ENCODE measurements at regions of chr7 and their contacts with region 1.

Region 1: GRCh38 chr7:43834463-43835251 is 34.7 kb downstream of the MRPS24 start:
- DNase-seq: peak in 1 of 2 experiments; percentile 83
- H3K4me3 ChIP-seq: peak overlapping the region; percentile 36; the same call in 1 of the 2 replicates
- H3K27ac ChIP-seq: no peak overlapping the region
- H3K4me1 ChIP-seq: no peaks in the 10 kb centered on the region; the same call in 1 of the 2 replicates
- H3K27me3 ChIP-seq: no peaks in the 10 kb centered on the region
- CTCF ChIP-seq: no peak

Region 2: DNA sequence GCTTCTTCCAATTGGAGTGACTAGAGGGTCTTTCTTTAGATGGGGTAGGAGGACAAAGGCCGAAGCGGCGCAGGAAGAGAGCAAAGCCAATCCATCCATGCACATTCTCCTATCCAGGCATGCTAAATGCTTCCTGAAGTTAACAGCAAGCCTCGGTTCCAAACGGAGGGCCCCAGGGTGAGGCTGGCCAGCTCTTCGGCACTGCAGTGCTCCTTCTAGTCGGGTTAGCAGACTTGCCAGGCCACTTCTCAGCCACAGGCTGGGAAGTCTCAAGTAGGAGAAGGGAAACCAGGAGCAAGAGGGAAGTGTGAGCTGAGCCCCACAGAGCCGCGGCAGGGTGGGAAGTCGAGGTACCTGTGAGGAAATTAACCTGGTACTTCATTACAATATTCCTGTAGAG is 1878.0 kb before region 1 on chr7:
- CTCF ChIA-PET with region 1: no interaction called
- POLR2A ChIA-PET with region 1: interaction called, 21 read pairs
- intact Hi-C with region 1: no loop called
- DNase-seq: no peak
- H3K4me3 ChIP-seq: no peak overlapping the region
- H3K27ac ChIP-seq: no peak overlapping the region
- H3K4me1 ChIP-seq: no peaks in the 10 kb centered on the region
- H3K27me3 ChIP-seq: peaks cover 91% of the 10 kb centered on the region
- CTCF ChIP-seq: no peak

Region 3: GRCh38 chr7:43454936-43455518 is 379.6 kb before region 1 on chr7:
- CTCF ChIA-PET with region 1: no interaction called
- POLR2A ChIA-PET with region 1: no interaction called
- intact Hi-C with region 1: loop called (anchors 5 kb)
- DNase-seq: peak in 1 of 2 experiments; percentile 48
- H3K4me3 ChIP-seq: no peak overlapping the region; the same call in 1 of the 2 replicates
- H3K27ac ChIP-seq: no peak overlapping the region
- H3K4me1 ChIP-seq: no peaks in the 10 kb centered on the region
- H3K27me3 ChIP-seq: peaks cover 49% of the 10 kb centered on the region
- CTCF ChIP-seq: peak; percentile 83

Region 4: DNA sequence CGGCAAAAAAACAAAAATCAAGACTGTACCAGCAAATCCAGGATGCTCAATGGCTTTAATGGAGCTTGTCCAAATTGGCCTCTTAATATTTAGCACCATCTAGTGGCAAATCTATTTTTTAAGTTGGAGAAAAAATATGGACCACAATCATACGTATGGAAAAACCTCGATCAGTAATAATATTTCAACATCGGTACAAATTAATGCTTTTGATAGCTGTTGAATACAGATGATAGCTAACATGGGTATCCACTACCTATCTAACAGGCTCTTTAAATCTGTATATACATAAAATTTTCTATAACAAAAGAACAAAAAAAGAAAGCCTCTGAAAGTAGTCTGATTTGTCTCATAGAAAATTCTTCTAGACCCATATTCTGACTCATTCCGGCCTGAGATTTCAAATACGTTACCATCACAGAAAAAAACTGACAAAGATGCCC is 134.6 kb before region 1 on chr7:
- CTCF ChIA-PET with region 1: interaction called, 3 read pairs
- POLR2A ChIA-PET with region 1: no interaction called
- intact Hi-C with region 1: loop called (anchors 1 kb)
- DNase-seq: peak in 1 of 2 experiments; percentile 68
- H3K4me3 ChIP-seq: no peak overlapping the region
- H3K27ac ChIP-seq: no peak overlapping the region
- H3K4me1 ChIP-seq: peaks cover 5% of the 10 kb centered on the region
- H3K27me3 ChIP-seq: no peaks in the 10 kb centered on the region
- CTCF ChIP-seq: peak; percentile 93

Region 5: GRCh38 chr7:43808135-43808809 is 26.4 kb before region 1 on chr7:
- CTCF ChIA-PET with region 1: no interaction called
- POLR2A ChIA-PET with region 1: no interaction called
- intact Hi-C with region 1: no loop called
- DNase-seq: no peak
- H3K4me3 ChIP-seq: no peak overlapping the region
- H3K27ac ChIP-seq: no peak overlapping the region
- H3K4me1 ChIP-seq: no peaks in the 10 kb centered on the region
- H3K27me3 ChIP-seq: no peaks in the 10 kb centered on the region
- CTCF ChIP-seq: no peak

Region 6: DNA sequence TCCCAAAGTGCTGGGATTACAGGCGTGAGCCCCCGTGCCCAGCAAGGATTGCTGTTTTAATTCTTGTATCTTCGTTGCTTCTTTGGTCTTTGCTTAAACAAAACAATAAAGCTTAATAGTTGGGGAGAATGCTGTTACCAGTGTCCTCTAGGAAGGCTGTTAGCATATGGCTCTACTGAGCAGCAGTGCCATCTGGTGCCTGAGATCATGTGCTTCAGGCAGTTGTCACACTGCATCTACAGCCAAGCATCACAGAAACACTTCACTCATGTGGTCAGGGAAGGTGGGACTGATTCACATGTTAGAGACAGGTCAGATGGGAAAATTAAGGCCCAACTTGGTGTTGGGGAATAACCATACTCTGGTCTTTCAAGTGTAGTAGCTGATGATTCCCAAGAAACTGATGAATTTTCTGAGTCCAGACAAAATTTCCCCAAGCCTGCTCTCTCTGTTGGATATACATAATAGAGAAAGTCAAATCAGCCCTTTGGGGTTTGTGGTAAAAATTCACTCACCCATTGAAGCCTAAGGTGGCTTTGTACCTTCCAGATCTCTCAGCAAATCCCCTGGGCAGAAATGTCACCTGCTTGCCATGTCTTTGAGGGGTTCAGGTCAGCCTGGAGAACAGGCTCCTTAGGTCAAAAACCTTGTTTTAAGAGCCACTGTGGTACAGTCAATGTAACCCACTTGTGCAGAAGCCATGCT is 120.0 kb after region 1 on chr7:
- CTCF ChIA-PET with region 1: interaction called, 3 read pairs
- POLR2A ChIA-PET with region 1: no interaction called
- intact Hi-C with region 1: loop called (anchors 1 kb)
- DNase-seq: peak; percentile 51 to 70
- H3K4me3 ChIP-seq: no peak overlapping the region
- H3K27ac ChIP-seq: no peak overlapping the region
- H3K4me1 ChIP-seq: no peaks in the 10 kb centered on the region
- H3K27me3 ChIP-seq: no peaks in the 10 kb centered on the region
- CTCF ChIP-seq: peak; percentile 84

Measured in PC-9 (cell line).